ENCODE measurements at regions of chr7 and their contacts with region 1.

Region 1: GRCh38 chr7:92425321-92425947 is 21.8 kb upstream of the GATAD1 start:
- DNase-seq: no peak
- ATAC-seq: no peak
- H3K4me3 ChIP-seq: no peak overlapping the region
- H3K27ac ChIP-seq: no peak overlapping the region
- H3K4me1 ChIP-seq: no peaks in the 10 kb centered on the region; the same call in 1 of the 2 replicates
- H3K27me3 ChIP-seq: no peaks in the 10 kb centered on the region
- CTCF ChIP-seq: no peak

Region 2: DNA sequence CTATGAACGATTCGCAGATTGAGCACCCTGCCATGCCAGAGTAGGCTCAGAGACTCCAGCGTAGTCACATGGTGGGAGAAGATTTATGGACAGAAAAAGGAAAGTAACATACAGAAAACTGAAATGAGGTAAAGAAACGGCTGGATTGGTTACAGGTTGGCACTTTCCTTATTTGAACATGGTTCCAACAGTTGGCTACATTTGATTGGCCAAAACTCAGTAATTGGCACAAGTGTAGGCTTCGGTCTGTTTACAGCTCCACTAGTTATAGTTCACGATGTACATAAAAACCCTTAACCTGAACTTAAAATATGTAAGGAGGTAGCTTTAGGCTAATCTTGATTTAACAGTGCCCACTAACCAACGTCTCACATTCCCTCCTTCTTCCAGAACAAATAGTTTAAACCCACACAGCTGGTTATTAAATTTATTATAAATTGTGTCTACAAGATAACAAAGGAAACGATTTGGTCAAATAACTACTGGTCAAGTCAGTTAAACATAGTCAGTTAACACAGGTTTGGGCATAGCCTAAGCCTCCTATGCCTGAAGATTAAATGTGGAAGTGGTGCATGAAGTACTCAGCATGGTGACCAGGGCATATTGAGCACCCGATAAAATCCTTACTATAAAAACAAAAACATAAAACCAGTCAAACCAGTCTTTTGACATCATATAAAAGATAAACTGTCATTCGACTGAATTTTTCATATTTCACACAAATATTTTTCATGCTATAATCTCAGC is 527.0 kb before region 1 on chr7:
- CTCF ChIA-PET with region 1: no interaction called
- POLR2A ChIA-PET with region 1: no interaction called
- intact Hi-C with region 1: no loop called
- DNase-seq: peak; percentile 48
- ATAC-seq: peak; percentile 82
- H3K4me3 ChIP-seq: peak overlapping the region; percentile 56
- H3K27ac ChIP-seq: 0 out of 2 replicates have a peak overlapping the region, but pooled peaks have one; percentile 11
- H3K4me1 ChIP-seq: peaks cover 23% of the 10 kb centered on the region
- H3K27me3 ChIP-seq: no peaks in the 10 kb centered on the region
- CTCF ChIP-seq: no peak

Region 3: GRCh38 chr7:92296880-92297445 is 128.5 kb before region 1 on chr7:
- CTCF ChIA-PET with region 1: no interaction called
- POLR2A ChIA-PET with region 1: no interaction called
- intact Hi-C with region 1: no loop called
- DNase-seq: no peak
- ATAC-seq: no peak
- H3K4me3 ChIP-seq: no peak overlapping the region
- H3K27ac ChIP-seq: no peak overlapping the region
- H3K4me1 ChIP-seq: no peaks in the 10 kb centered on the region
- H3K27me3 ChIP-seq: no peaks in the 10 kb centered on the region
- CTCF ChIP-seq: no peak

Region 4: GRCh38 chr7:92356406-92356805 is 69.0 kb before region 1 on chr7:
- CTCF ChIA-PET with region 1: no interaction called
- POLR2A ChIA-PET with region 1: no interaction called
- intact Hi-C with region 1: no loop called
- DNase-seq: no peak
- ATAC-seq: no peak
- H3K4me3 ChIP-seq: no peak overlapping the region
- H3K27ac ChIP-seq: no peak overlapping the region
- H3K4me1 ChIP-seq: no peaks in the 10 kb centered on the region
- H3K27me3 ChIP-seq: no peaks in the 10 kb centered on the region
- CTCF ChIP-seq: no peak

Region 5: GRCh38 chr7:92460109-92460508 is 34.7 kb after region 1 on chr7:
- CTCF ChIA-PET with region 1: no interaction called
- POLR2A ChIA-PET with region 1: no interaction called
- intact Hi-C with region 1: loop called (anchors 1 kb)
- DNase-seq: peak; percentile 78
- ATAC-seq: peak; percentile 87
- H3K4me3 ChIP-seq: no peak overlapping the region
- H3K27ac ChIP-seq: no peak overlapping the region
- H3K4me1 ChIP-seq: peaks cover 23% of the 10 kb centered on the region
- H3K27me3 ChIP-seq: no peaks in the 10 kb centered on the region
- CTCF ChIP-seq: no peak

Region 6: GRCh38 chr7:92517631-92518030 is 92.2 kb after region 1 on chr7:
- CTCF ChIA-PET with region 1: interaction called, 10 read pairs
- POLR2A ChIA-PET with region 1: no interaction called
- intact Hi-C with region 1: no loop called
- DNase-seq: peak; percentile 4
- ATAC-seq: no peak
- H3K4me3 ChIP-seq: no peak overlapping the region
- H3K27ac ChIP-seq: no peak overlapping the region
- H3K4me1 ChIP-seq: no peaks in the 10 kb centered on the region
- H3K27me3 ChIP-seq: no peaks in the 10 kb centered on the region
- CTCF ChIP-seq: no peak